CD8-positive, alpha-beta memory T cell (primary cell): ENCODE measurements at regions of chr2 and their contacts with region 1.

Region 1: GRCh38 chr2:219041252-219041651 is at the start of gene CFAP65:
- DNase-seq: peak in 1 of 5 donors; percentile 25
- H3K4me3 ChIP-seq: no peak within 1 kb of the TSS
- H3K4me3 Mint-ChIP-seq: peak within 1 kb of the TSS in 6 of 7 donors; percentile 51 to 72 (median 60)
- H3K27ac ChIP-seq: no peak within 1 kb of the TSS
- H3K27ac Mint-ChIP-seq: peak within 1 kb of the TSS in 1 of 8 donors; percentile 77
- H3K4me1 ChIP-seq: no peaks in the 10 kb centered on the region
- H3K4me1 Mint-ChIP-seq: peaks cover 8 to 11% (median 10%) of the 10 kb centered on the region in 3 donors
- H3K27me3 ChIP-seq: peaks cover 10% of the 10 kb centered on the region
- H3K27me3 Mint-ChIP-seq: peaks cover 35 to 80% of the 10 kb centered on the region in 2 donors
- total RNA-seq, gene CFAP65: not detected

Region 2: GRCh38 chr2:218944759-218945404 is 96.4 kb before region 1 on chr2:
- CTCF ChIA-PET with region 1: no interaction called
- POLR2A ChIA-PET with region 1: no interaction called
- DNase-seq: no peak
- H3K4me3 ChIP-seq: no peak overlapping the region
- H3K4me3 Mint-ChIP-seq: no peak overlapping the region
- H3K27ac ChIP-seq: no peak overlapping the region
- H3K27ac Mint-ChIP-seq: no peak overlapping the region
- H3K4me1 ChIP-seq: no peaks in the 10 kb centered on the region
- H3K4me1 Mint-ChIP-seq: no peaks in the 10 kb centered on the region
- H3K27me3 ChIP-seq: peaks cover 12% of the 10 kb centered on the region
- H3K27me3 Mint-ChIP-seq: peaks cover 30 to 61% of the 10 kb centered on the region in 2 donors

Region 3: GRCh38 chr2:219029829-219030165 is 11.5 kb before region 1 on chr2:
- CTCF ChIA-PET with region 1: interaction called, 21 read pairs
- POLR2A ChIA-PET with region 1: no interaction called
- DNase-seq: peak; percentile 62 to 84 (median 68)
- H3K4me3 ChIP-seq: no peak overlapping the region
- H3K4me3 Mint-ChIP-seq: no peak overlapping the region
- H3K27ac ChIP-seq: no peak overlapping the region
- H3K27ac Mint-ChIP-seq: peak overlapping the region in 1 of 8 donors; percentile 88
- H3K4me1 ChIP-seq: no peaks in the 10 kb centered on the region
- H3K4me1 Mint-ChIP-seq: no peaks in the 10 kb centered on the region
- H3K27me3 ChIP-seq: peaks cover 4% of the 10 kb centered on the region
- H3K27me3 Mint-ChIP-seq: peaks cover 14 to 44% of the 10 kb centered on the region in 2 donors